HEK293 (cell line): ENCODE measurements at regions of chr6 and their contacts with region 1.

Region 1: DNA sequence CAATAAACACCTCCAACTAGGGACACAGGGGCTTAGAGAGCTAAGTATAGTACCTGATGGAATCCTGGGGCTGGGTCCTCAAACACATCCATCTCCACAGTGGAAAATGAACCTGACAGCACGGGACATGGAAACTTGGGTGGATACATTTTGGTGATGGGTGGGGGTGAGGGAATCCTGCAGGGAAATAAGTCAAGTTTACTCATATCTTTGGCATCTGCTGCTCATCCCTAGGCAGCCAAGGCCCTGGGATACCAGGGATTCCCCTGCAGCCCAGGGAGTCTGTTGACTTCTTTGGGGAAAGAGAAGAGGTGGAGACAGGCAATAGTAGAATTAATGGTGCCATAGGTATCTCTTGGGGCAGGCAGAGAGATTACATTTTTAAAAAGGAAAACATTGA is 6.6 kb downstream of the APOBEC2 start:
- H3K4me3 ChIP-seq: no peak overlapping the region
- H3K27ac ChIP-seq: no peak overlapping the region
- H3K4me1 ChIP-seq: no peaks in the 10 kb centered on the region
- CTCF ChIP-seq: no peak

Region 2: DNA sequence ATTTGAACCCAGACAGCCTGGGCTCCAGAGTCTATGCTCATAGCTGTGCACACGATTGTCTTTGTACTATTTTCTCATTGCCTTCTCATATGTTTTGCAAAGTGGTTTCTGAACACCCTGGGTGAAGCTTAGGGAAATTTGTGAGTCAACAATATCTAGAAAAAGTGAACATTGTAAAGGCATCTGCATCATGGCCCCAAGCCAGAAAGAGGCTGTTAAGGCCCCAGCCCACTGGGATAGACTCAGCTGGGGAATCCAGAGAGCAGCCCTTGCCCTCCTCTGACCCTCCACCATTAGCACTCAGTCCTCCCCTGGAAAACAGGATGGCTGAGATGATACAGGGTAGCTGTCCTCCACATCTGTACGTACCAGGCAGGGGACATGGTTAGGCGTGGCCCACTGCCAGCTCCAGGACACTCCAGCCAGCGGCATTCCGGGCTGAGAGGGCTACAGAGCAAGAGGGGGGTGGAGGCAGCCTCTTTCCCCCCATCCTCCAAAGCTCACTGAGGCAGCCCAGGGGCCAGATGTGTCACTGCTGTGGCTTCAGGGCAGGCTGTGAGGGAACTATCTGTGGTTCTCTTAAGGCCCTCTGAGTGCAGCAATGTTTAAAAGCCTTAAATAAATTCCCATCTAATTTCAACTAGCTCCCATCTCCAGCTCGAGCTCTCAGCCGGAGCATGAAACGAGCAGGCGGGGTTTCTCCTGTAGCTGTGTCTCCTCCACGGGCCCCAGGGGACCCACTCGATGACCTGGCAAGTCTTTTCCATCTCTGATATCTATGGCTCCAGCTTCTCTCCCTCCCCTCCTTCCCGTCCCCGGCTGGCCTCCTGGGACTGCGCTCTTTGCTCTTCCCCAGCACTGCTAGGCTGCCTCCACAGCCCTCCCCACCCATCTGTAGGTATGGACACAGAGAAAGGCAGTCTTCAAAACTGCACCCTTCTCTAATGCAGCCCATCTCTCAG is 263.0 kb before region 1 on chr6:
- CTCF ChIA-PET with region 1: no interaction called
- POLR2A ChIA-PET with region 1: no interaction called
- H3K4me3 ChIP-seq: no peak overlapping the region
- H3K27ac ChIP-seq: no peak overlapping the region
- H3K4me1 ChIP-seq: no peaks in the 10 kb centered on the region
- CTCF ChIP-seq: no peak

Region 3: DNA sequence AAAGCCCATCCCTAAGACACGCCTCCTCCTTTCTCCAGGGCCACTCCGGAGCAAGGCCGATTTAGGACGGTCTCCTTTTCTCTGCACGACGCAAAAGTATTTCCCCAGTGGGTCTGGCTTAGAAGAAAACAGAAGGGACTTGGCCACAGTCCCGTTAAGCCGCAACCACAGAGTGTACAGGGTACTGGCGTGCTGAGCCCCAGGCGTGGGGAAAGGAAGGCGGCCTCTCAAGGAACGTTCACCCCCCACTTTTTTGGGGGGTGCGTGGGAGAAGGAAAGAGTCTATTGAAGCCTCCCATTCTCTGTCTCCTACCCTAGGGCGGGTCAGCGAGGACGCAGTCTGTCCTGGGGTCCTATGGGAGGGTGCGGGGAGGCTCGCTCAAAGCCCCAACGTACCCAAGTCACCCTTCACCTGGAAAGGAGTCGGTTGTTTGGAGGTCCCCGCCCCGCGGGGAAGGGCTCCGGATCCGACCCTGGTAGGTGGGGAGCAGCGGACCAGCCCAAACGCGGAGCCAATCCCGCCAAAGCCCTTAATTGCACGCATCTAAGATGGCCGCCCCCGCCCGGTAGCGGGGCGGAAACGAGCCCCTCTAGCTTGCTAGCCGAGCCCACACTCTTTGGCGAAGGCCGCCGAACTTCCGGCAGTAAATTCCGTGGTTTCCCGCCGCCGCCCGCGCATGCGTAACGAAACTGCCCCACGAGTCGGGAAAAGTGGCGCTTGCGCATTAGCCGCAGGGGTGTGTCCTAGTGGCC is 12.5 kb after region 1 on chr6 and contains the start of gene OARD1:
- CTCF ChIA-PET with region 1: interaction called, 25 read pairs
- POLR2A ChIA-PET with region 1: interaction called, 4 read pairs
- H3K4me3 ChIP-seq: peak within 1 kb of the TSS; percentile 95
- H3K27ac ChIP-seq: peak within 1 kb of the TSS; percentile 94
- H3K4me1 ChIP-seq: 0 out of 2 replicates have a peak, but pooled peaks cover 2% of the 10 kb centered on the region
- CTCF ChIP-seq: no peak